ENCODE measurements at regions of chr6 and their contacts with region 1.

Region 1: GRCh38 chr6:3125815-3126214 is 7.3 kb downstream of the BPHL start:
- DNase-seq: no peak
- H3K4me3 ChIP-seq: no peak overlapping the region
- H3K27ac ChIP-seq: no peak overlapping the region
- H3K4me1 ChIP-seq: peaks cover under 1% of the 10 kb centered on the region
- H3K27me3 ChIP-seq: no peaks in the 10 kb centered on the region
- CTCF ChIP-seq: no peak

Region 2: DNA sequence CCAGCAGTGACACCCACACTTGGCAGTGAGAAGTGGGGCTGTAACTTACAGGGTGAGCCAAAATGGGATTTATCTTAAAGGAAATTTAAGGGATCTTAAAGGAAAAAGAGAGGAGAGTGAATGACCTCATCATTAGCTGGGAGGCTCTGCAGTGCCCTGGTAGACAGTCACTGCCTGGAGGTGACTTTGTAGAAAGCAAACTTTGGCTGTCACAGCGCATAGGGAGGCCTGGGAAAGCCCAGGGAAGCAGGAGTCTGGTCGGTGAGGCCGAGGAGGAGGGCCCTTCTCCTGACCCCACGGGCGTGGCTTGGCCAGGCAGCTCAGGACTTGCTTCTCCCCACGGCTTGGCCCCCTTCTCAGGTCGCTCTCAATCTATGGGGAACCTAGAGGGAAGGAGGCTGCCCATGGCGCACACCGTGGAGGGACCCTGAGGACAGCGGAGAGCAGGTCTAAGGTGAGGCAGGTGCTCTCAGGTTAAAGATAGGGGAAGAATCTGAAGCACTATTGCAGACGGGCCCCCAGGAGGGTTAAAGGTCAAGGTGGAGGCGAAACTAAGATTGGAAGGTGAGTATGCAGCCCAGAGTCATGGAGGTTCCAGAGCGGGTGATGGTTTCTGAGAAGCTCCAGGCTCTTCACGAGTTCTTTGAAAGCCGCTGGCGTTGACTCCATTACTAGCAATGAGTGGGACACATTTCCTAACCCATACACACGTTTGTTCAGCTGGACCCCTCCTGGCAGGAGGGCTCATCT is 73.2 kb before region 1 on chr6:
- CTCF ChIA-PET with region 1: no interaction called
- POLR2A ChIA-PET with region 1: no interaction called
- intact Hi-C with region 1: no loop called
- DNase-seq: no peak
- H3K4me3 ChIP-seq: no peak overlapping the region
- H3K27ac ChIP-seq: no peak overlapping the region
- H3K4me1 ChIP-seq: no peaks in the 10 kb centered on the region
- H3K27me3 ChIP-seq: no peaks in the 10 kb centered on the region
- CTCF ChIP-seq: no peak

Region 3: DNA sequence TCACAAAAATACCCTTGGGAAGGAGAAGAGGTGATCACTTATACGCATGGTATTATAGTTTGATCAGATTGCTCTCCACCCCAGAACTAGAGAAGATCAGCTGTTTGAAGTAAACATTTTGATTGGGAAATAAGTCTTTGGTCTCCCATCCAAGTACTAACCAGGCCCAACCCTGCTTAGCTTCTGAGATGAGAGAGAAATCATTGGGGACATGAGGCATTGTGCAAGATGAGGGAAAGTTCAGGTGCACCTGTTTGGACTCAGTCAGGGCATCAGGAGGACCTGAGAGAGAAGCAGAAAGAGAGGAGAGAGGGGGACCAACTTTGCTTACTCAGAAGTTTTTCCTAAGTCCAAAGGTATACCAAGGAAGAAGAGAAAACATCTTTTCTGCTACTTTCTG is 46.1 kb before region 1 on chr6:
- CTCF ChIA-PET with region 1: no interaction called
- POLR2A ChIA-PET with region 1: no interaction called
- intact Hi-C with region 1: no loop called
- DNase-seq: no peak
- H3K4me3 ChIP-seq: no peak overlapping the region
- H3K27ac ChIP-seq: no peak overlapping the region
- H3K4me1 ChIP-seq: no peaks in the 10 kb centered on the region
- H3K27me3 ChIP-seq: no peaks in the 10 kb centered on the region
- CTCF ChIP-seq: no peak

Region 4: DNA sequence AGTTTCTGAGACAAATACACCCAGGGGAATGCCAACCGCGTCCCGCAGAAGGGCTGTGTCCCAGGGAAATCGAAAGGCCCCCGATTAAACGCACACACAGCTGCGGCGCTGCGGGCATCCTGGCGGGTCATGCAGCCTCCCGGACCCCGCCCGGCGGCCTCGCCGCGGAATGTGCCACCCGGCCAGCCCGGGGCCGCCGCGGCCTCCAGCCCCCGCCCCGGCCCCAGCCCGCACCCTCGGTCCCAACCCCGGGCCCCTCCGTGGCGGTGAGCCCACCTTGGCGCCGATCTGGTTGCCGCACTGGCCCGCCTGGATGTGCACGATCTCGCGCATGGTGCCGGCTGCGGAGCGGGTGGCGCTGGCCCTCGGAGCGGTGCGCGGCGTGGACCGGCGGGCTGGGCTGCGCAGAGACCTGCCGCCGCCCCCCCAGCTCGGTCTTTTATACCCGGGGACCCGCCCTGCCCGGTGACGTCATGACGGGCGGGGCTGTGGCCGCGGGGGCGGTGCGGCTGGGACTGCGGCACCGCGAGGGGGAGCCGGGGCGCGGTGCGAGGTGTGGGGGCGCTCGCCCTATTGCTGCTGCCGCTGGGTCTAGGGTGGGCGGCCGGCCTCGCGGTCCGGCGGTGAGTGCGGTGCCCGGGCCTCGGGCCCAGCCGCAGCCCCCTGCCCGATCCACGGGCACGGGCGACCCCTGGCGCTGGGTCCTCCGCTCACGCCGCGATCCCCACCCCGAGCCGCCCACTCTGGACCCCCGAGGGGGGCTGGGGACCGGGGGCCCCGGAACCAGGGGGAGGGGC is 31.5 kb after region 1 on chr6 and contains the start of gene TUBB2A:
- CTCF ChIA-PET with region 1: no interaction called
- POLR2A ChIA-PET with region 1: no interaction called
- intact Hi-C with region 1: loop called (anchors 2 kb)
- DNase-seq: peak; percentile 44 to 86
- H3K4me3 ChIP-seq: peak within 1 kb of the TSS; percentile 69
- H3K27ac ChIP-seq: no peak within 1 kb of the TSS
- H3K4me1 ChIP-seq: peaks cover 10% of the 10 kb centered on the region
- H3K27me3 ChIP-seq: no peaks in the 10 kb centered on the region
- CTCF ChIP-seq: peak; percentile 40; the same call in 1 of the 2 replicates
- total RNA-seq, gene TUBB2A: 17.0 and 19.0 TPM in 2 replicates

Region 5: GRCh38 chr6:3209114-3210023 is 83.6 kb after region 1 on chr6:
- CTCF ChIA-PET with region 1: no interaction called
- POLR2A ChIA-PET with region 1: no interaction called
- intact Hi-C with region 1: loop called (anchors 5 kb)
- DNase-seq: peak; percentile 87 to 98
- H3K4me3 ChIP-seq: peak overlapping the region; percentile 19; the same call in 1 of the 2 replicates
- H3K27ac ChIP-seq: peak overlapping the region; percentile 83
- H3K4me1 ChIP-seq: peaks cover 37% of the 10 kb centered on the region
- H3K27me3 ChIP-seq: no peaks in the 10 kb centered on the region
- CTCF ChIP-seq: no peak

Region 6: DNA sequence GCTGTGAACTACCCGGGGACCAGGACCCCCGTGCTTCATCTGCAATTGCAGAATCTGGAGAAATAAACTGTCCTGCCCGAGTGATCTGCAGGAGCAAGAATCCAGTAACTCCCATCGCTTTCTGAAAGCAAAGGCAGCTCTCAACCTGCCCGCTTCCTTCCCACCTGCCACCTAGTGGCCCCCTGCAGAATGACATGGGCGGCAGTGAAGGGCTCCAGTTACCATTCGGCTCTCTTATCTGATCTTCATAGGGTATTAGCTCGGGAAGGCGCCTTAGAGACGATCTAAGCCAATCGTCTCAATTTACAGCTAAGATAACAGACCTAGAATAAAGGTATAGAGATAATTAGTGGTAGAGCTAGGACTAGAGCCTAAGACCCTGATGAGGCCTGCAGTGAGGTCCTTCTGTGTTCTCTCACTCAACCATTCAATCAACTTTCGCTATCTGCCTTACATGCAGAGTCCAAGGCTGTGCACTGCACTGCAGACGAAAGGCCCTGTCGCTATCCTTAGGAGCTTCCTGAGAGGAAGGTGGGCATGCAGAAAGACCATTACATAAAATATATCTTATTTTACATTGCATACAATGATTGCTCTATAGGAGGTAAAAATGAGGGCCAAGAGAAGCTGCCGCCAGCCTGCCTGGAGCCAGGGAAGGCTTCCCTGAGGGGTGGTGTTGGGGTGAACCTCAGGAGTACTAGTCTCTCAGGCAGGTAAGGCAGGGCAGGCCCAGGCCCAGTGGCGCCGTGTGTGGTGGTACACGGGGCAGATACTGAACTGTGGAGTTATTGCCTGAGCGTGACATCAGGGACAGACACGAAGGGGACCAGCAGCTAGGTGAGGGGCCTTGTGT is 125.9 kb after region 1 on chr6:
- CTCF ChIA-PET with region 1: interaction called, 5 read pairs
- POLR2A ChIA-PET with region 1: no interaction called
- intact Hi-C with region 1: loop called (anchors 2 kb)
- DNase-seq: peak; percentile 71 to 89
- H3K4me3 ChIP-seq: peak overlapping the region; percentile 5; the same call in 1 of the 2 replicates
- H3K27ac ChIP-seq: 0 out of 2 replicates have a peak overlapping the region, but pooled peaks have one; percentile 40
- H3K4me1 ChIP-seq: peaks cover 15% of the 10 kb centered on the region
- H3K27me3 ChIP-seq: no peaks in the 10 kb centered on the region
- CTCF ChIP-seq: peak; percentile 93

Region 7: DNA sequence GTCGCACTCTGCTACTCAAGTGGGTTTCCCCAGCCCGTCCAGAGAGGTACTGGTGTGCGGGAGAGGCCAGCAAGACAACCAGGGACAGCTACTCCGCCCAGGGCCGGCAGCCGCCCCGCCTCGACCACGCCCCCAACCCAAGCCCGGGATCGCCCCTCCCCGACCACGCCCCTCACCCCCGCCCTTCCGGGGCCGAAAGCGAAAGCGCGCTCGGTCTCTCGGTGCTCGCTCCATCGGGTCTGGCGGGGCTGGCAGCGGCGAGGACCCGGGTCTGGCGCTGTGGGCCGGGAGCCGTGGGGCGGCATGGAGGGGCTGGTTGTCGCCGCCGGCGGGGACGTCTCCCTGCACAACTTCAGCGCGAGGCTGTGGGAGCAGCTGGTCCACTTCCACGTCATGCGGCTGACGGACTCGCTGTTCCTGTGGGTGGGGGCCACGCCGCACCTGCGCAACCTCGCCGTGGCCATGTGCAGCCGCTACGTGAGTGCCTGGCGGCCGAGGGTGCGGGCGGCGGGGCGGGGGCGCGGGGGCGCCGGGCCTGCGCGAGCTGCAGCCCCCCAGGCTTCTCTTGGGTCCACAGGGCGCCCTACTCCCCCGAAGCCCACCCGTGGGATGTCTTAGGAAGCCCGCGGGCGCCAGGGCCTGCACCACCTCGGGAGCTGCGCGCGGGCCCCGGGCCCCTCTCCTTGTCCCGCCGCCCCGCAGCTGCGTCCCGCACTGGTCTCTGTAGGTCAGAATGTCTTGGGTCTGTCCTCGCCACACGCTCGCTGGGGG is 133.1 kb after region 1 on chr6 and contains the start of gene PSMG4:
- CTCF ChIA-PET with region 1: interaction called, 7 read pairs
- POLR2A ChIA-PET with region 1: interaction called, 3 read pairs
- intact Hi-C with region 1: loop called (anchors 2 kb)
- DNase-seq: peak; percentile 41 to 93
- H3K4me3 ChIP-seq: peak within 1 kb of the TSS; percentile 81
- H3K27ac ChIP-seq: peak within 1 kb of the TSS; percentile 23
- H3K4me1 ChIP-seq: 0 out of 2 replicates have a peak, but pooled peaks cover 5% of the 10 kb centered on the region
- H3K27me3 ChIP-seq: no peaks in the 10 kb centered on the region
- CTCF ChIP-seq: no peak
- total RNA-seq, gene PSMG4: 33.8 and 47.6 TPM in 2 replicates

Region 8: DNA sequence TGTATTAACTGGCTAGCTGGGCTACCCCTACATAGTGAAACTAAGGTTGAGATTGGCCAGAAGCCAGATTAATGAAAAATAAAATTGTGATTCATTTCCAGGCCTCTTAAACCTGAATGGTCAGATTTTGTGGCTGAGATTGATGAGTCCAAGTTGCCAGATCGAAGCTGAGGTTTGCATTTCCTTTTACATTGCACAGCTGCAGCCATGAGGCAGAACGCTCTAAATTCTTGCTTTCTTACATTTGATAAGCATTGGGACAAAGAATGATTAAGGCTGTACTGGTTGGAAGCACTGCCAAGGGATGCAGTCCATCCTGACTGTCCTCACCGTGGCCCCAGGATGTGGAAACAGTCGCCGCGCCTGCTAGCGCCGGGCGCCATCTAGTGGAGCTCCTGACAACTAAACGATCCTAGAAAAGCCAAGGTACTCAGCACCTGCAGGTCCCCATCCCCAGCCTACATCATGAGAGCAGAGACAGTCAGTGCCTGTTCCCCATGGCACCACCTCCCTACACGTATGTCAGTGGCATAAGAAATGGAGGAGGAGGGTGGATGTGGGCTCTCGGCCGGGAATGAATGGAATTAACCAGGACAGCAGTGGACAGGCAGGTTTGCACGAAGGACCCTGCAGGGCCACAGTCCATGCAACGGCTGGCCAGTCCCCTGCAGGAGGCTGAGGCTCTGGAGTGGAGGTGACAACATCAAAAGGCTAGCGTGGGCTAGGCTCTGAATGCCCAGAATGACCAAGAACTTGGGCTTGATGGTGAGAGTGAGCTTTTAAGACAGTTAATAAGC is 606.7 kb after region 1 on chr6:
- CTCF ChIA-PET with region 1: no interaction called
- POLR2A ChIA-PET with region 1: no interaction called
- intact Hi-C with region 1: loop called (anchors 1 kb)
- DNase-seq: peak; percentile 55 to 72
- H3K4me3 ChIP-seq: no peak overlapping the region
- H3K27ac ChIP-seq: no peak overlapping the region
- H3K4me1 ChIP-seq: no peaks in the 10 kb centered on the region
- H3K27me3 ChIP-seq: no peaks in the 10 kb centered on the region
- CTCF ChIP-seq: peak; percentile 86

Measured in PC-9 (cell line).